ENCODE measurements at regions of chr7 and their contacts with region 1.

Region 1: DNA sequence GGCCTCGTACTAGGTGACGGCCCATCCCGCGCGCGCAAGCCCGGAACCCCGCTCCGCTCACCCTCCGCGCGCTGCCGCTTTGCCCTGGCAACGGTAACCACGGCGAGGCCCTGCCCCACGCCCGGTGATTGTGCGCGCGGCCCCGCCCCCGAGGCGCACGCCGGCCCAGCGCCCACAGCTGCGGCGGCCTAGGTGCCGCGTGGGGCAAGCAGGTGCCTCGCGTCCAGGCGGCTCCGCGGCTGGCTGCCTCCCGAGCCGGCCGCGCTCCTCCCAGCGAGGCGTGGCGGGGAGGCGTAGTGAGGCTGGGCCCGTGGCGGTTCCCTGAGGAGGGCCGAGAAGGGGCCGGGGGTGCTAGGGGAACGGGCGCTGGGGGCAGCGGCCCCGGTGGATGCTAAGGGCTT is at the start of gene SMKR1:
- DNase-seq: peak; percentile 75 to 98
- ATAC-seq: peak; percentile 92 to 98 (median 95)
- H3K4me3 ChIP-seq: peak within 1 kb of the TSS; percentile 57
- H3K4me3 Mint-ChIP-seq: peak within 1 kb of the TSS; percentile 91
- H3K27ac ChIP-seq: peak within 1 kb of the TSS; percentile 83
- H3K27ac Mint-ChIP-seq: peak within 1 kb of the TSS; percentile 85 to 88
- H3K4me1 ChIP-seq: peaks cover 33% of the 10 kb centered on the region
- H3K4me1 Mint-ChIP-seq: peaks cover 30 to 31% of the 10 kb centered on the region in 2 donors
- H3K27me3 ChIP-seq: no peaks in the 10 kb centered on the region
- H3K27me3 Mint-ChIP-seq: no peaks in the 10 kb centered on the region
- CTCF ChIP-seq: no peak
- total RNA-seq, gene SMKR1: 4.9 to 9.7 (median 8.4) TPM

Region 2: GRCh38 chr7:129471402-129471827 is 31.0 kb before region 1 on chr7:
- intact Hi-C with region 1: no loop called
- DNase-seq: no peak
- ATAC-seq: no peak
- H3K4me3 ChIP-seq: no peak overlapping the region
- H3K4me3 Mint-ChIP-seq: no peak overlapping the region
- H3K27ac ChIP-seq: no peak overlapping the region
- H3K27ac Mint-ChIP-seq: no peak overlapping the region
- H3K4me1 ChIP-seq: no peaks in the 10 kb centered on the region
- H3K4me1 Mint-ChIP-seq: peaks cover 0 to 5% of the 10 kb centered on the region in 2 donors
- H3K27me3 ChIP-seq: no peaks in the 10 kb centered on the region
- H3K27me3 Mint-ChIP-seq: no peaks in the 10 kb centered on the region
- CTCF ChIP-seq: no peak

Region 3: DNA sequence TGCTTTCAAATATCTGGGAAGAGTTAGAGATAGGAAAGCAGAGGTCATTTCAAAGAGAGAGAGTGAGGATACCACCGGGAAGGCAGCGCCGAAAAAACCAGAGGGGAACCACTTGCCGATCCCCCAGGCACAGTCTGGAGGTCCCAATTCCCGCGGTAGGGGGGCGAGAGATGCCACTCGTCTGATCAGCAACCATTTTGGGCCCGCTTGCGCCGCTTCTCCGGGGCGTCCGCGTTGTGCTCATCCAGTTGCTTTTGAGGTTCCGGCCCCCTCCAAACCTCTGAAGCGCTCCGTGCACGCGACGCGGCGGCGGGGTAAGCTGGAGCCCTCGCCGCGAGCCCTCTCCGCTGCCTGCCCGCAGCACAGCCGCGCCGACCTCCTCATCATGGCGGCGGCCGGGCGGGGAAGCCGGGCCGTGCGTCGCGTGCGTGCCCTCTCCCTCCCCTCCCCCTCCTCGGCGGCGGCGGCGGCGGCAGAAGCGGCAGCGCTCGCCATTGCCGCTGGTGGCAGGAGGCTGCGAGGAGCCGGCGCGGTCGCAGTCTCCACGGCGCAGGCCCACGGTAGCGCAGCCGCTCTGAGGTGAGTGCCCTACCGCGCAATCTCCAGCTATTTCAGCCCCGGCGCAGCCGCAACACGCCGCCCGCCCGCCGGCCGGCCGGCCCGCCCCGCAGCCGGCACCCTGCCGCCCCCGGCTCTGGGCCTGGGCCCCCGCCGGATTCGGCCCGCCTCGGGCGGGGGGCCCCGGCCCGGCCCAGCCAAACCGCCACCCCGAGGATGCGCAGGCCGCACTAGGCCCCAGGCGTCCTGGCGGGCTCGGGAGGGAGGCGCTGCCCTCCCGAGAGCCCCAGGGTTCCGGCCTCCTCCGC is 109.1 kb after region 1 on chr7 and contains the start of gene NRF1:
- intact Hi-C with region 1: loop called (anchors 1 kb)
- DNase-seq: peak; percentile 92 to 95
- ATAC-seq: peak; percentile 79 to 94 (median 87)
- H3K4me3 ChIP-seq: peak within 1 kb of the TSS; percentile 93
- H3K4me3 Mint-ChIP-seq: peak within 1 kb of the TSS; percentile 97
- H3K27ac ChIP-seq: peak within 1 kb of the TSS; percentile 91
- H3K27ac Mint-ChIP-seq: peak within 1 kb of the TSS; percentile 95 to 96
- H3K4me1 ChIP-seq: peaks cover 42% of the 10 kb centered on the region
- H3K4me1 Mint-ChIP-seq: peaks cover 48 to 71% of the 10 kb centered on the region in 2 donors
- H3K27me3 ChIP-seq: no peaks in the 10 kb centered on the region
- H3K27me3 Mint-ChIP-seq: no peaks in the 10 kb centered on the region
- CTCF ChIP-seq: no peak
- total RNA-seq, gene NRF1: 39.8 to 43.5 (median 40.1) TPM